Posterior cingulate gyrus (tissue), 11 donors: ENCODE measurements at regions of chr6 and their contacts with region 1.

Region 1: DNA sequence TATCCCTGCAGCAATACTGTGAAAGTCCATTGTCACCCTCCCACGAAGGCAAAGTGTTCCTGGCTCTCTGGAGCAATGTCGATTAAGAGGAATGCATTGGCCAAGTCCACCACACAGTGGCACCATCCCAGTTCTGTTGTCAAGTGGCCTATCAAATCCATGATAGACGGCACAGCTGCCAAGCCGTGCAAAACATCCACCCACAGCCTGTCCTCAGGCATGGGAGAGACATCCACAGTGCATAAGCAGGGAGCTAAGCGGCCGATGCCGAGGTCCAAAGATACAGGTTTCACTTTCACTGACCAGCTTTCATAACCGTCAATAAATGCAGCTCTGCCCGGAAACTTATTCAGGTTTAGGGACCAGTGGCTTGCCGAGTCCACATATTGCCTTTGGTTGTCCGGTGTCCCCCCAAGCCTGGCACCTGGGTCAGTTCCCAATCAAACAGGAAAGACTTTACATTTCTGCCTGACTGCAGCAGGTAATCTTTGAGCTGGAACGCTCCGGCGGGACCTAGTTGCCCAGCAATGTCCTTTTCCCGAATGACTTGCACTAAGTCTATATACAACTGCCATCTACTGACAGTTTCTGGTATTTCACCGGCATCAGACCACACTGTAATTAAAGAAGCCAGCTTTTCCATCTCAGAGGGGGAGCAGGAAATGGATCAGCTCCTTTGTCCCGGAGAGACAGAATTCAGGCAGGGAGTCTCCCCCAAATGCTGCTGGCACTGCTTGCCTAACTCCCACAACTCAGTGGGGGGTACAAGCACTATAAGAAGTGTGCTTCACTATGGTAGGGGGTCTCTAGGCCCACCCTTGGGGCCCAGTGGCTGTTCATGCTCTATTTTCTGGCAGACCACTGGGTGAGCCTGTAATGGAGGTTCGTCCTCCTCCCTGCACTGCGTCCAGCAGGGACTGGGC is 6.3 kb downstream of the ZKSCAN3 start:
- DNase-seq: peak; percentile 49 to 95 (median 68)

Region 2: GRCh38 chr6:28274888-28275287 is 81.1 kb before region 1 on chr6:
- intact Hi-C with region 1: loop called (anchors 5 kb)
- DNase-seq: no peak

Region 3: GRCh38 chr6:28335564-28336283 is 20.3 kb before region 1 on chr6 and contains the start of gene ZSCAN31:
- intact Hi-C with region 1: loop called (anchors 1 kb)
- DNase-seq: peak; percentile 75 to 98 (median 88)

Region 4: GRCh38 chr6:28399350-28400121 is 43.5 kb after region 1 on chr6 and contains the start of gene ZSCAN12:
- intact Hi-C with region 1: loop called (anchors 5 kb)
- DNase-seq: peak; percentile 76 to 97 (median 86)